HCT116 (cell line): ENCODE measurements at regions of chr6 and their contacts with region 1.

Region 1: GRCh38 chr6:95923518-95923917 is 92.3 kb upstream of the FUT9 start:
- DNase-seq: peak; percentile 7
- ATAC-seq: peak; percentile 77
- H3K4me3 ChIP-seq: no peak overlapping the region
- H3K27ac ChIP-seq: no peak overlapping the region
- H3K4me1 ChIP-seq: no peaks in the 10 kb centered on the region
- H3K27me3 ChIP-seq: no peaks in the 10 kb centered on the region
- CTCF ChIP-seq: peak in 2 of 3 experiments; percentile 55 to 57; a peak in 4 of 6 replicates
- POLR2A ChIP-seq: no peak
- RAD21 ChIP-seq: peak; percentile 40; the same call in 1 of the 2 replicates

Region 2: DNA sequence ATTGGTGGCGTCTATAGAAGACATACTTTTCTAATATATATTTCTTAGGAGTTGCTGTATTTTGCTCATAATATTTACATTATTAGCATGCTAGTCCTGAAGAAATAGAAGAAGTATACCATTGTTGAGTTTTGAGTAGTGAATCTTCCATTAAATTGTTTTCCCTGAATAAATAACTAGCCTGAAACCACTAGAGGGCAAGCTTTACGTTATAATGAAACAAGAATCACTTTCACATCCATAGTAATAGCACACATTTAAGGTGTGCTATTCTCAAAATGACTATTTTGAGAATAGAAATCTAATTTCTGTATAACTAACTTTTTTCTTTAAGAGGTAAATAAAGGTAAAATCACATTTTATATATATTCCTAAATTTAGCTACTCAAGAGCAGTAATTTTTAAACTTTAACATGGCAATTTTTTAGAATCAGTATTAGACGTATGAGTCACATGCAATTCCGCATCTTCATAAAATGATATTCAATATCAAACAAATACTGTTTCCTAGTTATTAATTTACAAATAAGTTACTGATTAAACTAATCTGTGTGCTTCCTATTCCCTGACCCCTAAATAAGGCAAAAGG is 559.4 kb before region 1 on chr6:
- CTCF ChIA-PET with region 1: no interaction called
- POLR2A ChIA-PET with region 1: no interaction called
- RAD21 ChIA-PET with region 1: no interaction called
- intact Hi-C with region 1: loop called (anchors 5 kb)
- DNase-seq: peak; percentile 8
- ATAC-seq: no peak
- H3K4me3 ChIP-seq: no peak overlapping the region
- H3K27ac ChIP-seq: no peak overlapping the region
- H3K4me1 ChIP-seq: no peaks in the 10 kb centered on the region
- H3K27me3 ChIP-seq: no peaks in the 10 kb centered on the region
- CTCF ChIP-seq: peak in 2 of 3 experiments; percentile 34 to 66; a peak in 5 of 6 replicates
- POLR2A ChIP-seq: no peak
- RAD21 ChIP-seq: peak; percentile 58